HepG2 (cell line): ENCODE measurements at regions of chr9 and their contacts with region 1.

Region 1: GRCh38 chr9:69535911-69536310 is 136.3 kb downstream of the APBA1 start:
- DNase-seq: no peak
- ATAC-seq: no peak
- H3K4me3 ChIP-seq: no peak overlapping the region
- H3K27ac ChIP-seq: no peak overlapping the region
- H3K4me1 ChIP-seq: no peaks in the 10 kb centered on the region
- H3K27me3 ChIP-seq: no peaks in the 10 kb centered on the region
- CTCF ChIP-seq: no peak
- EP300 ChIP-seq: no peak
- POLR2A ChIP-seq: no peak
- RAD21 ChIP-seq: no peak

Region 2: DNA sequence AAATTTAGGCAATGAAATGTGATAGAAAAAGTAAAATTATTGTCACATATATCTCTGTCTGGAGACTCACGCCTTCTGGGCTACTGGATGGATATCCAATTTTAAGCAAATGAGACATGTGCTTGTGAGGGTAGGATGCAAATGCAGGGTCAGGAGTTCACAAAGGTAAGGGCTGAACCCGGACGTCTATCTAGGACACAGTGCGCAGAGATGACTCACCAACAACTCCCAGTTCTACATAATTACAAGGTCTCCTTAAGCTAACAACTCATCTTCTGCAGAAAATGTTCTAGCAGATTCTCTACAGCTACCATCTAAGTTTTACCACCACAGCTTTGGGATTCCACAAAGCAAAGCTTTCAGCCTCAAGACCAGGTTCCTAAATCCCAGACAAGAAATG is 50.4 kb before region 1 on chr9:
- CTCF ChIA-PET with region 1: no interaction called
- POLR2A ChIA-PET with region 1: no interaction called
- in situ Hi-C with region 1: loop called (anchors 5 kb)
- intact Hi-C with region 1: no loop called
- DNase-seq: no peak
- ATAC-seq: no peak
- H3K4me3 ChIP-seq: no peak overlapping the region
- H3K27ac ChIP-seq: no peak overlapping the region
- H3K4me1 ChIP-seq: peaks cover 9% of the 10 kb centered on the region
- H3K27me3 ChIP-seq: no peaks in the 10 kb centered on the region
- CTCF ChIP-seq: no peak
- EP300 ChIP-seq: no peak
- POLR2A ChIP-seq: no peak
- RAD21 ChIP-seq: no peak

Region 3: DNA sequence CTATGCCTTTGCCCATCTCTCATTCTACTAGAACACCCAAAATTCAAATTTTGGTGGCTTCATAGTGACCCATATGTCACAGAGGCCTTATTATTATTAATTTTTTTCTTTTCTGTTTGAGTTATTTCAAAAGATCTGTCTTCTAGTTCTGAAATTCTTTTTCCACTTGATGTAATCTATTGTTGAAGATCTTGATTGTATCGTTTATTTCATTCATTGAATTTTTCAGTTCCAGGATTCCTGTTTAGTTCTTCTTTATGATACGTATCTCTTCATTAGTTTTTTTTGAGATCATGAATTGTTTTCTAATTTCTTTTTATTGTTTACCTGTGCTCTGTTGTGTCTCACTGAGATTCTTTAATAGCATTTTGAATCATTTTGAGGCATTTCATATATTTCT is 160.9 kb after region 1 on chr9:
- CTCF ChIA-PET with region 1: no interaction called
- POLR2A ChIA-PET with region 1: no interaction called
- in situ Hi-C with region 1: no loop called
- intact Hi-C with region 1: no loop called
- DNase-seq: no peak
- ATAC-seq: no peak
- H3K4me3 ChIP-seq: no peak overlapping the region
- H3K27ac ChIP-seq: no peak overlapping the region
- H3K4me1 ChIP-seq: no peaks in the 10 kb centered on the region
- H3K27me3 ChIP-seq: no peaks in the 10 kb centered on the region
- CTCF ChIP-seq: no peak
- EP300 ChIP-seq: no peak
- POLR2A ChIP-seq: no peak
- RAD21 ChIP-seq: no peak